Astrocyte of the cerebellum (primary cell): ENCODE measurements at regions of chr13 and their contacts with region 1.

Region 1: DNA sequence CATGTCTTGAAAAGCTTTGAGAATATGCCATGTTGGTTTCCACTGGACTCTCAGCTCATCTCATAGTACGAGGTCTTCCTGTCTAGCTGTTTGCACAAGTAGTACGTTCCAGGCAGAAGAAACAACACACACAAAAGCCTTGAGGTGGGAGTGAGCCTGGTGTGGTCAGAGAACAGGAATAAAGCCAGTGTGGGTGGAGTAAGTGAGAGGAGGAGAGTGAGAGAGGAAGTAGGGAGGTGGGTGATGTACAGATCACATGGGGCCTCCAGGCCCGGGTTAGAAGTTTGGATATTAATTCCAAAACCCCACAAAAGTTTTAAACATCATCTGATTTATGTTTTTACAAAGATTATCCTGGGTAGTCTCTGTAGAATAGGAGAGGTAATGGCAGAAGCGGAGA is 230.6 kb downstream of the MTUS2 start:
- DNase-seq: no peak
- H3K4me3 ChIP-seq: no peak overlapping the region
- CTCF ChIP-seq: no peak

Region 2: DNA sequence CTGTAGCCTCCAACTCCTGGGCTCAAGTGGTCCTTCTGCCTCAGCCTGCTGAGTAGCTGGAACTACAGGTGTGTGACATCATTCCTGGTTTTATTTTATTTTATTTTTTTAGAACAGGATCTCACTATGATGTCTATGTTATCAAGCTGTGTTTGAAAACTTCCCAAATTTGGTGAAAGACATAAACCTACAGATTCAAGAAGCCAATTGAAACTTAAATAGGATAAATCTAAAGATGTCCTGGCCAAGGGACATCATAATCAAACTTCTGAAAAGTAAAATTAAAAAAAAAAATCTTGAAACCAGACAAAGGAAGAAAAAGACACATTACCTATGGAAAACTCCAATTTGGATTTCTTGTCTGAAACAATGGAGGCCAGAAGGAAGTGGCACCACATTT is 1154.0 kb before region 1 on chr13:
- in situ Hi-C with region 1: no loop called
- DNase-seq: no peak
- H3K4me3 ChIP-seq: no peak overlapping the region
- CTCF ChIP-seq: no peak

Region 3: DNA sequence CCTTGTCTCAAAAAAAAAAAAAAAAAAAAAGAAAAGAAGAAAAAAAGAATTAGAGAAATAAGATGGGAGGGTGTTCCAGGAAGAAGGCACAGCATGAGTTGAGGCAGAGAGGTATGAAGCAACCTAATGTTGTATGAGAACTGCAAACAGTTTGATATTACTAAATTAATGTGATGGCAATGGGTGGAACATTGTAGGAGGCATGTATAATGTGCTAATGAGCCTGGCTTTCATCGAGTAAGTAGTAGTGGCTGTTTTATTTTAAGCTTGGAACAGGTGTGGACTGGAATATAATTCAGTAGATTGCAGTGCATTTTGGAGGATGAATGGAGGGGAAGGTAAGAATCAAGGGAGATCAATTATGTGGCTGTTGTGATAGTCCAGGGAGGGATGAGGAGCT is 74.5 kb before region 1 on chr13:
- in situ Hi-C with region 1: loop called (anchors 5 kb)
- DNase-seq: no peak
- H3K4me3 ChIP-seq: no peak overlapping the region
- CTCF ChIP-seq: no peak

Region 4: DNA sequence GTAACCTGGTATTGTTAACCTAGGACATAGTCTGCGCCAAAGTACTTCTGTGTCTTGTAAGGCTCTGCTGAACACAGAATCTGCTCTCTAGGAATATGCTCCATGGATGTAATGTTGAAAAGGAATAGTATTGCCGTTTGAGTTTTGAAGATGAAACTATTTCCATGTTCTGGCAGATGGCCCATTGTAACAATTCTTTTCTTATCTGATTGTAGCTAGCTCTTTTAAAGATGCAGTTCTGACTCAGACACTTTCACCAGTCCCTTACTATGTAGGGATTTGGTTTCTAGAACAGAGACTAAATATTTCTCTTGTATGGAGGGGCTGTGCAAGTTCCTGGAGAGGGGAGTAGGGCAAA is 45.0 kb before region 1 on chr13:
- in situ Hi-C with region 1: no loop called
- DNase-seq: no peak
- H3K4me3 ChIP-seq: no peak overlapping the region
- CTCF ChIP-seq: no peak